ENCODE measurements at regions of chr3 and their contacts with region 1.

Region 1: DNA sequence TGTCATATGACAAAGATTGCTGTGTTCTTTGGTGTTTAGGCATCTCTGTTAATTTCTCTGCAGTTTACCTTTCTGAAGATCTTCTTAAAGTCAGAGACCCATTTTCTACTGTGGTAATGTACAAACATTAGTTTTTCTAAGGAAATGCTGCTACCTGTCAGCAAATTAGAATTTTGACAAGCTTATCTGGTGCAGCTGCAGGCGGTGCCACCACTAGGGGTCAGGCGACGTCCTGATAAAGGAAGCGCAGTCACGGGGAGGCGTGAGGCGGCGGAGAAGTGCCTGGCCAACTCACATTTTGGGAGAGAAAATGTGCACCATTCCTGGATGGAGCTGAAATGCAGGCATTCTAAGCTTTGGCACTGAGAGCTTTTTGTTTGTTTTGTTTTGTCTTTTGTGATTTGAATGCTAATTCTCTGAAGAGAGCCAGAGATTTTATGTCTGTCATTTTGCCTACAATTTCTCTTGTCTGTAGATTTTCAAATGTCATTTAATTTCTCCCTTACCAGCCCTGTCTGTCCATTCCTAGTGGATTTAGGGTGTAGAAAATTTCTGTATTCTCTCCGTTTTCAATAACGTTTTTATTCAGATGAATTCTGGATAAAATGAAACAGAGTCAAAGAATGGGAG is 24.9 kb upstream of the SIAH2 start:
- DNase-seq: peak; percentile 88 to 93 (median 90)
- ATAC-seq: peak; percentile 96 to 99 (median 99)
- H3K4me3 ChIP-seq: no peak overlapping the region
- H3K27ac ChIP-seq: no peak overlapping the region
- H3K4me1 ChIP-seq: peaks cover 0 to 3% (median 0%) of the 10 kb centered on the region in 4 donors
- H3K27me3 ChIP-seq: no peaks in the 10 kb centered on the region
- CTCF ChIP-seq: peak in 3 of 4 donors; percentile 85 to 96 (median 96)
- POLR2A ChIP-seq: no peak

Region 2: GRCh38 chr3:150868282-150868681 is 80.4 kb after region 1 on chr3:
- intact Hi-C with region 1: loop called in 1 of 2 experiments (anchors 10 kb)
- DNase-seq: no peak
- ATAC-seq: no peak
- H3K4me3 ChIP-seq: no peak overlapping the region
- H3K27ac ChIP-seq: no peak overlapping the region
- H3K4me1 ChIP-seq: no peaks in the 10 kb centered on the region
- H3K27me3 ChIP-seq: no peaks in the 10 kb centered on the region
- CTCF ChIP-seq: no peak
- POLR2A ChIP-seq: no peak

Region 3: DNA sequence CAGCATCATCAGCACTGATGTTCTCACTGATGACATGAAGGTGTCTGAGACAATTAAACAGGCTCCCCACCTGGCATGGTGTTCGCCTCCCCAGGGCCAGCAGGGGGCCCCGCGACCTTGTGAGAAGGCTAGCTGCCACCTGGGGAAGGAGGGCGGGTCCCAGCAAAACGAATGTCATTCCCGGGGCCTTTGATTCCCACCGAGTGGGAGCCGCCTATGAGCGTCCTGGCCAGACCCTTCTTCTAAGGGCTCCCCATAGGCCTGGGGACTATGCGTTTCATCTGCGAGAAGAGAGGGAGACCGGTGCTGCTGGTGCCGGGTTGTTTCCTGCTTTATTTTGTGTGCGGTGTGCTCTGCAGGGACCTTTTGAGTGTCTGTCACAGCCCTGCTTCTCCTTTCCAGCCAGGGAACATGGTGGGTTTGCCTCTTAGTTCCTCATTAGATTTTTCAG is 137.9 kb after region 1 on chr3:
- intact Hi-C with region 1: no loop called
- DNase-seq: peak in 2 of 3 donors; percentile 49 to 59
- ATAC-seq: peak; percentile 60 to 86 (median 74)
- H3K4me3 ChIP-seq: peak overlapping the region in 1 of 3 donors; percentile 16
- H3K27ac ChIP-seq: no peak overlapping the region
- H3K4me1 ChIP-seq: no peaks in the 10 kb centered on the region
- H3K27me3 ChIP-seq: no peaks in the 10 kb centered on the region
- CTCF ChIP-seq: peak; percentile 49 to 59 (median 52)
- POLR2A ChIP-seq: no peak

Measured in right lobe of liver (tissue), 6 donors.